PC-9 (cell line): ENCODE measurements at regions of chr3 and their contacts with region 1.

Region 1: DNA sequence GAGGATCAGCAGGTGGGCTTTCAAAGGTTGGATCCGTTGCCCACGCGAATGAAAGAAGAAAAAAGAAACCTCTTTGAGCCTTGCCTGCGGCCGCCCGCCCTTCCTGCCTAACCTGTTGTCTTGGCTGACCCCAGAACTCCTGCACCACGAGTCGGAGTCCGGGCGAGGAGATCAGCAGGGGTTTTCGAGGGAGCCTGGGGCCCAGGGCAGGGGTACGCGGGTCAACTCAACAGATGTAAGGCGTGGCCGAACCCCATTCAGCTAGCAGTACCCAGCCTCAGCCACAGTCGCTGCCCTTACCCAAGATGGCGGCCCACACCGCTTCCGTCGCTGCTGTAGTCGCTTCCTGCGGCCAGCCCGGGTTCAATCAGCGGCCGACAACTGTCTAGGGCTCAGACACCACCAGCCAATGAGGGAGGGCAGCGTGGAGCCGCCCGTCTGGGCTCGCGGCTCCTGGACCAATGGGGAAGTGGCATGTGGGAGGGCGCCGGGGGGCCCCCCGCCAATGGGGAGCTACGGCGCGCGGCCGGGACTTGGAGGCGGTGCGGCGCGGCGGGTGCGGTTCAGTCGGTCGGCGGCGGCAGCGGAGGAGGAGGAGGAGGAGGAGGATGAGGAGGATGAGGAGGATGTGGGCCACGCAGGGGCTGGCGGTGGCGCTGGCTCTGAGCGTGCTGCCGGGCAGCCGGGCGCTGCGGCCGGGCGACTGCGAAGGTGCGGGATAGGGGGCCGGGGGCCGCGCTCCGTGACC is at the start of gene MANF:
- DNase-seq: peak; percentile 94 to 97
- H3K4me3 ChIP-seq: peak within 1 kb of the TSS; percentile 91
- H3K27ac ChIP-seq: peak within 1 kb of the TSS; percentile 84
- H3K4me1 ChIP-seq: peaks cover 41% of the 10 kb centered on the region
- H3K27me3 ChIP-seq: no peaks in the 10 kb centered on the region
- CTCF ChIP-seq: no peak
- total RNA-seq, gene MANF: 75.0 and 79.1 TPM in 2 replicates

Region 2: DNA sequence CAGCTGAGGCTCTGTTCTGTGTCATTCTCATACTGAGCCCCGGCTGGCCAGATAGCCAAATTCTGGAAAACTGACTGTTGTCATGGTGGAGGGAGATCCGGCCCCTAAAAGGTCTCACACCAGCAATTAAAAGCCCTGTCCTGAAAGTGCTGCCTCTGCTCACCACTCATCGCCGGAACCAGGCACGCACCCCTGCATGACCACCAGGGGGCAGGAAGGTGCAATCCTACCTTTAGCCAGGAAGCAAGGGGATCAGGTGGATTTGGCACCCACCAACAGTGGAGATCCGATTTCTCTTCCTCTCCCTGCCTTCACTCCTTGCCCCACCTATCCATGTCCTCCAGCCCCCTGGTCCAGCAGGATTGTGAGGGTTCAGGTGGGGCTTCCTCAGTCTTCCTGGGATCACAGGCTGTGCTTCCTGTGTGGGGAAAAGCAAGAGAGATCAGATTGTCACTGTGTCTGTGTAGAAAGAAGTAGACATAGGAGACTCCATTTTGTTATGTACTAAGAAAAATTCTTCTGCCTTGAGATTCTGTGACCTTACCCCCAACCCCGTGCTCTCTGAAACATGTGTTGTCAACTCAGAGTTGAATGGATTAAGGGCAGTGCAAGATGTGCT is 865.3 kb before region 1 on chr3:
- CTCF ChIA-PET with region 1: no interaction called
- POLR2A ChIA-PET with region 1: interaction called, 26 read pairs
- intact Hi-C with region 1: no loop called
- DNase-seq: peak; percentile 43 to 72
- H3K4me3 ChIP-seq: no peak overlapping the region
- H3K27ac ChIP-seq: no peak overlapping the region
- H3K4me1 ChIP-seq: no peaks in the 10 kb centered on the region
- H3K27me3 ChIP-seq: peaks cover 61% of the 10 kb centered on the region
- CTCF ChIP-seq: peak; percentile 89

Region 3: DNA sequence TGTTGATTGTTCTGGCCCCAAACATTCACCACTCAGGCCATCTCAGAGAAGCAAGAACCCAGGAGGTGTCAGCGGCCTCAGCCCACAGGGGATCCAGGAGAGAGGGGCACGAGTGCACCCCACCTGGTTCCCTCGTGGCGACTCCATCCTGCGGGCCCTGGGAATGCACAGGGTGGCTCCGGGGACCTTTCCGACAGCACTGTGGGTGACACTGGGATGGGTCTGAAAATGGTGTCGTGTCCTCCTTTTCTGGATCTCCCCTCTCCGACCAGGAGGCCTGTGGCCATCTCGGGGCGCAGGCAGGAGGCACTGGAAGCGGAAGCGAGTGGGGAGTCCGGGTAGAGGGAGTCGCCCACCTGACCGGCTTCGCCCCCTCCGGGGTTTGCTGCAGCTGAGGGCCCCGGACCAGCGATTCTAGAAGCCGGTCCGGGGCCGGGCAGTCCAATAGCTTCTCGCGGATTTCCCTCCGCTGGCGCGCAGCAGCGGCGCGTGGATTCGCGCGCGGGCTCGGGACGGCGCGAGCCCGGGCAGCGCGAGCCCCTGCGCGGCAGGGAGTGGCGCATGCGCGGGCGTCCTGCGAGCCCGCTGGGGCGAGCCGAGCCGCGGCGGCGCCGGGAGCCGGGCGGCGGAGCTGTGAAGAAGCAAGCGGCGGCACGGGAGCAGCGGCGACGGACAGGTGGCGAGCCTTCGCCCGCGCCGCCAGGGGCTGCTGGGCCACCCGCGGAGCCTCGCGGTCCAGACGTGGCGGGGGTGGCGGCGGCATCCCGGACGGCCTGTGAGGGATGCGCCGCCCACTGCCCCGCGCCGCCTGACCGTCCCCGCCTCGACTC is 710.3 kb before region 1 on chr3 and contains the start of gene DOCK3:
- CTCF ChIA-PET with region 1: no interaction called
- POLR2A ChIA-PET with region 1: no interaction called
- intact Hi-C with region 1: loop called (anchors 5 kb)
- DNase-seq: peak in 1 of 2 experiments; percentile 65
- H3K4me3 ChIP-seq: peak within 1 kb of the TSS; percentile 76
- H3K27ac ChIP-seq: peak within 1 kb of the TSS; percentile 24; the same call in 1 of the 2 replicates
- H3K4me1 ChIP-seq: peaks cover 25% of the 10 kb centered on the region
- H3K27me3 ChIP-seq: no peaks in the 10 kb centered on the region
- CTCF ChIP-seq: no peak
- total RNA-seq, gene DOCK3: 15.2 and 16.9 TPM in 2 replicates

Region 4: DNA sequence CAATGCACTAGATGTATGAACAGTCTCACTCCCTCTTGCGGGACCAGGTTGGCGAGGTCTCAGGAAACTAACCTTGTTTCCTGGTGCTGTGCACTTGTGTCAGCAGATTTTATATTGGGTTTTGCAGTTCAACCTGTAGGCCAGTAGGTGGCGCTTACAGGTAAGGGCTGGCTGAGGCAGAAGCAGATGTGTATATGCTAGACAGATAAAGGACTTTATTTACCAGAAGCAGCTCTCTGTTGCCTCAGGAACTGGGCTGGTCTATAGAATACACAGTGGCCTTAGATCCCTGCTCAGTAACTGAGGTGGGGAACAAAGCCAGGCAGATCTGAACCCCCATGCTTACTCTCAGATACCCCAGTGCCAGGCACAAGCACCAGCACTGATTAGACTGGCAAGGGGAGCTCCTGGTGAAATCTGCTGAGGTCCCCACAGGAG is 413.4 kb before region 1 on chr3:
- CTCF ChIA-PET with region 1: no interaction called
- POLR2A ChIA-PET with region 1: no interaction called
- intact Hi-C with region 1: loop called (anchors 5 kb)
- DNase-seq: peak; percentile 56 to 68
- H3K4me3 ChIP-seq: no peak overlapping the region
- H3K27ac ChIP-seq: no peak overlapping the region
- H3K4me1 ChIP-seq: no peaks in the 10 kb centered on the region; the same call in 1 of the 2 replicates
- H3K27me3 ChIP-seq: no peaks in the 10 kb centered on the region
- CTCF ChIP-seq: peak; percentile 89

Region 5: GRCh38 chr3:51340013-51340856 is 44.7 kb before region 1 on chr3:
- CTCF ChIA-PET with region 1: no interaction called
- POLR2A ChIA-PET with region 1: interaction called, 14 read pairs
- intact Hi-C with region 1: no loop called
- DNase-seq: peak; percentile 67 to 88
- H3K4me3 ChIP-seq: no peak overlapping the region
- H3K27ac ChIP-seq: peak overlapping the region; percentile 91
- H3K4me1 ChIP-seq: peaks cover 54% of the 10 kb centered on the region
- H3K27me3 ChIP-seq: no peaks in the 10 kb centered on the region
- CTCF ChIP-seq: no peak